ENCODE measurements at regions of chrX and their contacts with region 1.

Region 1: DNA sequence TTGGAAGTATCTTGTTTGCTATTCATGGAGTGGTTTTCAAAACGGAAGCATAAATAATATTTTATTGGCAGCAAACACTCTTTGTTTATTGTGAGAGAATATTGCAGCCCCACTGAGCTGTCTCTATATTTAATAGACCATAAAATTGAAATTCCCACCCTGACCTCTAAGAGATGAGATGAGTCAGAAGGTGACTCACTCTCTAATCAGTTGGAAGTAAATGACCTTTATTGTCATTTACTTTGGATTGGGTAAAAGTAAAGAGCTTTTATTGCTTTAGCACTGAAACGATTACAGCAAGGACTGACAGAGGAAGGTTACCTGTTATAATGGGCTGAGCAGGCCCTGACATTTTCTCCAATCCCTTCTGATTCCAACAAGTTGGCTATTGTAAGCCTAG is 55.0 kb downstream of the SYTL5 start:
- DNase-seq: peak; percentile 89
- ATAC-seq: peak; percentile 93
- H3K4me3 ChIP-seq: no peak overlapping the region
- H3K27ac ChIP-seq: peak overlapping the region; percentile 76
- H3K4me1 ChIP-seq: peaks cover 20% of the 10 kb centered on the region
- H3K27me3 ChIP-seq: no peaks in the 10 kb centered on the region
- CTCF ChIP-seq: no peak

Region 2: DNA sequence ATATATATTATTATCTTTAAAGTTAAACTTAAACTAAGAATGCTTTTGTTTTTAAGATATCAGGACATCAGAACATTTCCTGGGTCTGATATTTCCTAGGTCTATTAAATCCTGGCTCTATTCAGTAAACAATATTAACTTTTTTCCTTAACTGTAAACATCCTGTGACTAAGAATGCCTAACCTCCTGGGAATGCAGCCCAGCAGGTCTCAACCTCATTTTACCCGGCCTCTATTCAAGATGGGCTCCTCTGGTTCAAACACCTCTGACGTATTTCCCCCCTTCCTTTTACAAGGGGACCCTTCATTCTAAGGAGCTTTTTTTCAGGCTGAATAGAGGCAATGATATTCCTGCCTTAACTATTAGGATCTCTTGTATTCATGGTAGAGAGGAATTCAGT is 178.1 kb before region 1 on chrX:
- CTCF ChIA-PET with region 1: no interaction called
- POLR2A ChIA-PET with region 1: no interaction called
- intact Hi-C with region 1: loop called (anchors 2 kb)
- DNase-seq: peak; percentile 87
- ATAC-seq: peak; percentile 69
- H3K4me3 ChIP-seq: no peak overlapping the region; the same call in 1 of the 2 replicates
- H3K27ac ChIP-seq: peak overlapping the region; percentile 90
- H3K4me1 ChIP-seq: peaks cover 62% of the 10 kb centered on the region
- H3K27me3 ChIP-seq: no peaks in the 10 kb centered on the region
- CTCF ChIP-seq: no peak

Region 3: GRCh38 chrX:37912286-37912685 is 149.0 kb before region 1 on chrX:
- CTCF ChIA-PET with region 1: no interaction called
- POLR2A ChIA-PET with region 1: interaction called, 10 read pairs
- intact Hi-C with region 1: no loop called
- DNase-seq: peak; percentile 38
- ATAC-seq: peak; percentile 84
- H3K4me3 ChIP-seq: no peak overlapping the region
- H3K27ac ChIP-seq: 0 out of 2 replicates have a peak overlapping the region, but pooled peaks have one; percentile 18
- H3K4me1 ChIP-seq: peaks cover 13% of the 10 kb centered on the region
- H3K27me3 ChIP-seq: no peaks in the 10 kb centered on the region
- CTCF ChIP-seq: no peak

Region 4: DNA sequence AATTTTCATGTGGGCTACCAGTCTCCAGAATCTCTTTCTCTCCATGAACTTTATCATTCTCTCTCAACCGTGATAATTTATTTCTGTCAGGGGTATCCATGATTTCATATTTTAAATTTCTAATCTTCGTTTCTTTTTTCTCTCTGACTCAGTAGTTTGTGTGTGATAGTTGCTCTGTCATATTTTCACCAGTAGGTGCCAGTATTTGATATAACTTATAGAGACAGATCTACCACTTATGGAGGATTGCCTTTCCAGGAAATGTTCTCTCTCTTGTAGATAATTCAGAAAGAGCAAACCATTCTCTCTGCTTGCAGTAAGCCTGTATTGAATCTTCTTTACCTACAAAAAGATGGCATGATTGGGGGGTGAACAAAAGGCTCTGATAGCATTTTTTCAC is 134.6 kb before region 1 on chrX:
- CTCF ChIA-PET with region 1: no interaction called
- POLR2A ChIA-PET with region 1: no interaction called
- intact Hi-C with region 1: loop called (anchors 5 kb)
- DNase-seq: peak; percentile 69
- ATAC-seq: peak; percentile 39; the same call in 1 of the 2 replicates
- H3K4me3 ChIP-seq: no peak overlapping the region
- H3K27ac ChIP-seq: no peak overlapping the region
- H3K4me1 ChIP-seq: peaks cover 14% of the 10 kb centered on the region
- H3K27me3 ChIP-seq: no peaks in the 10 kb centered on the region
- CTCF ChIP-seq: peak; percentile 80

Region 5: DNA sequence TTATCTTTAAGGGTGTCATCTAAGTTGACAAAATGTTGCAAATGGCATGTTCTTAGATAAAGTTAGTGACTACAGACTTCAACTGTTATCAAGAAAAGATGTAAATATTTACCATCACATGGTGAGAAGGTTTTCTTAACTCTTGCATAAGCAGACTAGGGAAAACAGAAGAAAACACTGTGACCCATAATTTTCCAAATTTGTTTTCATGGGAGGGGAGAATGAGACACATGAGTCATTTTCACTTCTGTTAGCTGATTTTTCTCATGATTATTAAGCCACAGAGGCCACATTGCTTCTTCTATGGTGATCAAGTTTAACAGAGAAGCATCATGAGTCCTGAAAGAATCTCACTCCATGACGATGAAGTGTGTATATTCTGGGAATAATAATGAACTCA is 85.2 kb before region 1 on chrX:
- CTCF ChIA-PET with region 1: no interaction called
- POLR2A ChIA-PET with region 1: no interaction called
- intact Hi-C with region 1: loop called (anchors 1 kb)
- DNase-seq: no peak
- ATAC-seq: no peak
- H3K4me3 ChIP-seq: no peak overlapping the region
- H3K27ac ChIP-seq: no peak overlapping the region
- H3K4me1 ChIP-seq: peaks cover 13% of the 10 kb centered on the region
- H3K27me3 ChIP-seq: no peaks in the 10 kb centered on the region
- CTCF ChIP-seq: no peak

Region 6: GRCh38 chrX:38008619-38009018 is 52.7 kb before region 1 on chrX:
- CTCF ChIA-PET with region 1: no interaction called
- POLR2A ChIA-PET with region 1: no interaction called
- intact Hi-C with region 1: loop called (anchors 2 kb)
- DNase-seq: peak; percentile 66
- ATAC-seq: peak; percentile 69
- H3K4me3 ChIP-seq: no peak overlapping the region
- H3K27ac ChIP-seq: peak overlapping the region; percentile 32
- H3K4me1 ChIP-seq: peaks cover 48% of the 10 kb centered on the region
- H3K27me3 ChIP-seq: no peaks in the 10 kb centered on the region
- CTCF ChIP-seq: peak; percentile 39; the same call in 1 of the 2 replicates

Region 7: GRCh38 chrX:38127861-38128355 is 66.6 kb after region 1 on chrX:
- CTCF ChIA-PET with region 1: no interaction called
- POLR2A ChIA-PET with region 1: no interaction called
- intact Hi-C with region 1: no loop called
- DNase-seq: no peak
- ATAC-seq: no peak
- H3K4me3 ChIP-seq: no peak overlapping the region
- H3K27ac ChIP-seq: no peak overlapping the region
- H3K4me1 ChIP-seq: no peaks in the 10 kb centered on the region
- H3K27me3 ChIP-seq: no peaks in the 10 kb centered on the region
- CTCF ChIP-seq: no peak